ENCODE measurements at regions of chr1 and their contacts with region 1.

Region 1: DNA sequence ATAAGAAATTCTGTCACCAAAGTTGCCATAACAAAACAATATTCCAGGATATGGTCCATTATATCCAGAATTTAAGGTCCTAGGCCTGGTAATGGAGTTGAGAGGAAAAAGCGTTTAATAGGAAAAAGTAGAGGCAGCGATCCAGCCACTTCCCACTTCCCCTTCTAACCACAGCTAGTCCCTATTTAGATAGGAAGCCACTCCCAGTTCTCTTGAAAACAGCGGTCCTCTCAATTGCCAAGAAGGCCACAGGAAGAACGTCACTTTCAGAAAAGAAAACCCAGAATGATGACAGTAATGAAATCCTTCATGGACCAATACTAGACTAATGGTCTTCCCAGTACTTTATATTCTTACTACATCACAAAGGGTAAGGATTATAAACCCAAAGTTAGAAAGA is 38.6 kb downstream of the ABL2 start:
- DNase-seq: no peak
- ATAC-seq: peak; percentile 79

Region 2: DNA sequence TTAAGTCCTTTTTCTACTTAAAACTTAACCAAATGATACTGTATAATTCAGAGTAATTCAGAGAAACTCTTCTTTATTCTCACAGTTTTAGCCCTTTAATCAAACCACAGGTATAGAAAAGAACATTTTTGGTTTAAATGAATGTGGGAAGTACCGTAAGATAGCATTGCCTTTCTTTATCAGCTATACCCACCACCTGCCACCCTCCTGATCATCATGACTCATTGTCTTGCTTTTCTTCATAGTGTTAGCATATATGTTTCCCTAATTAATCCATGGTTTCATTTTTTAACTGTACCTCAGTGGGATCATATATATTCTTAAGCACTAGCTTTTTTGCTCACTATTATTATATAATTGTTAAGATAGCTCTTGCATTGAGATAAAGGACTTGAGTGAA is 292.5 kb before region 1 on chr1:
- intact Hi-C with region 1: no loop called
- DNase-seq: no peak
- ATAC-seq: no peak

Region 3: GRCh38 chr1:179121159-179121938 is 69.5 kb before region 1 on chr1:
- intact Hi-C with region 1: loop called (anchors 10 kb)
- DNase-seq: no peak
- ATAC-seq: peak; percentile 80

Measured in sciatic nerve (tissue), 2 donors.